CD4-positive, alpha-beta memory T cell (primary cell): ENCODE measurements at regions of chr19 and their contacts with region 1.

Region 1: DNA sequence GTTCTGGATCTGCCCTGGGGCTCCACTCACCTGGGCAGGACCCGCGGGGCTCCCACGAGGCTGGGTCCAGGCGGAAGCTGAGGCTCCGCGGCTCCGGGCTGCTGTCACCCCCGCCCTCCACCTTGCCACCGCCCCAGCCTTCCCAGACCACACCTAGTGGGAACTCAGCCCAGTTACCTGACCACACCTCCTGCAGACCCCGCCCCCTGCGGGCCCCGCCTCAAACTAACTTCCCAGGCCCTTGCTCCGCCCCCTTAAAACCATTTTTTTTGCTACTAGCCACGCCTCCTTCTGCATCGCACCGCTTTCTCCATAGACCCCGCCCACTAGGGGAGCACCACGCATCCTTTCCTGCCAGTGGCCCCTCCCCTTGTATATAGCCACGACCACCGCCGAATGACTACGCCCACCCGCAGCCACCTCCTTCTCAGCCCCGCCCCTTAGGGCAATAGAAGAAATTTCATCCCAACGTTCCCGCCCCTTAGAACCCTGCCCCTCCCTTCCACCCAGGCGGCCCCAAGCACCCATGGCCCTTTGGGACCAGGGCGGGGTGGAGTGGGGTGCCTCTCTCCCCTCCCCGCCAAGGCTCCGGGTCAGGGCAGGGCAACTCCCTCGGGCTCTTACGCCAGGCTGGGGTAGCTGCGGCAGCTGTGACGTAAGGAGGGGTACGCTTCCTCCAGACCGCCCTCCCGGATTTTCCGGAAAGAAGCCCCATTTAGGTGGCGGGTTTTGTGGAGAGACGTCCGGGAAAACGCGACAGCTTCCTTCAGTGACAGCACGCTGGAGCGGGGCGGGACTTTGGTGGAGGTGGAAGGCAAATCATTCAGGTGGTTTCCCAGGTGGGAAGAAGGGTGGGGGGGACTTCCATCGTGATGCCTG is at the start of gene SH2D3A:
- DNase-seq: peak; percentile 96 to 99 (median 96)
- H3K4me3 ChIP-seq: peak within 1 kb of the TSS; percentile 63 to 80
- H3K4me3 Mint-ChIP-seq: peak within 1 kb of the TSS; percentile 91 to 98 (median 94)
- H3K27ac ChIP-seq: peak within 1 kb of the TSS; percentile 97
- H3K27ac Mint-ChIP-seq: peak within 1 kb of the TSS; percentile 89 to 99 (median 96)
- H3K4me1 ChIP-seq: peaks cover 54% of the 10 kb centered on the region
- H3K4me1 Mint-ChIP-seq: peaks cover 31 to 67% (median 44%) of the 10 kb centered on the region in 4 donors
- H3K27me3 ChIP-seq: no peaks in the 10 kb centered on the region
- H3K27me3 Mint-ChIP-seq: no peaks in the 10 kb centered on the region
- total RNA-seq, gene SH2D3A: 59.3 to 64.3 TPM

Region 2: DNA sequence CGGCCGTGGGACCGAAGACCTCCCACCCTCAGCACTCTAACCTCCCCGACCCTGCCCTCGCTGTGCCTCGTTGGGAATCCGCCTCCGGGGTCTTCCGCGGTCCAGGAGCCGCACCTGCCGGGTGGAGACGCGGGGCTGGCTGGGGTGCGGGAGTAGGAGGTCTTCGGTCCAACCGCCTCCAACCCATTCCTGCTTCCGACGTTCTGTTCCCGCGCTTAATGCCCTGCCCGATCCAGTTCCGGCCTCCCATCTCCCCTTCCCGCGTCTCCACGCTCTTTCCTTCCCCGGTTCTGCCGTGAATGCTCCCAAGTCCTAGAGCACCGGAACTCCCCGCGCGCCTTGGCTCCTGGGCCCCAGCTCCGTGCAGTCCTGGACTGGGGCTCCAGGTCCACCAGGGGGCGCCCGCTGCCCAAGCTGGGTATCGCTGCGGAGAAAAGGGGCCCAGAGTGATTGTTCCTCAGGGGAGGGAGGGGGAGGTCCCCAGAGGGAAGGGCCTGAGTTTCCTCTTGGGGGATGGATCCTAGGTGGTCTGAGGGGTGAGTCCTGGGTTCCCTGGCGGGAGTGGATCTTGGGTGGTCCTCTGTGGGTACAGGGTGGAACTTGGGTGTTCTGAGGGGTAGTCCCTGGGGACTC is 250.8 kb before region 1 on chr19:
- CTCF ChIA-PET with region 1: interaction called, 4 read pairs
- POLR2A ChIA-PET with region 1: no interaction called
- intact Hi-C with region 1: loop called (anchors 2 kb)
- DNase-seq: peak; percentile 80 to 89 (median 85)
- H3K4me3 ChIP-seq: peak overlapping the region; percentile 30 to 70
- H3K4me3 Mint-ChIP-seq: peak overlapping the region; percentile 93 to 98 (median 96)
- H3K27ac ChIP-seq: peak overlapping the region; percentile 45
- H3K27ac Mint-ChIP-seq: peak overlapping the region; percentile 42 to 96 (median 84)
- H3K4me1 ChIP-seq: peaks cover 27% of the 10 kb centered on the region
- H3K4me1 Mint-ChIP-seq: peaks cover 21 to 38% (median 27%) of the 10 kb centered on the region in 4 donors
- H3K27me3 ChIP-seq: no peaks in the 10 kb centered on the region
- H3K27me3 Mint-ChIP-seq: no peaks in the 10 kb centered on the region

Region 3: DNA sequence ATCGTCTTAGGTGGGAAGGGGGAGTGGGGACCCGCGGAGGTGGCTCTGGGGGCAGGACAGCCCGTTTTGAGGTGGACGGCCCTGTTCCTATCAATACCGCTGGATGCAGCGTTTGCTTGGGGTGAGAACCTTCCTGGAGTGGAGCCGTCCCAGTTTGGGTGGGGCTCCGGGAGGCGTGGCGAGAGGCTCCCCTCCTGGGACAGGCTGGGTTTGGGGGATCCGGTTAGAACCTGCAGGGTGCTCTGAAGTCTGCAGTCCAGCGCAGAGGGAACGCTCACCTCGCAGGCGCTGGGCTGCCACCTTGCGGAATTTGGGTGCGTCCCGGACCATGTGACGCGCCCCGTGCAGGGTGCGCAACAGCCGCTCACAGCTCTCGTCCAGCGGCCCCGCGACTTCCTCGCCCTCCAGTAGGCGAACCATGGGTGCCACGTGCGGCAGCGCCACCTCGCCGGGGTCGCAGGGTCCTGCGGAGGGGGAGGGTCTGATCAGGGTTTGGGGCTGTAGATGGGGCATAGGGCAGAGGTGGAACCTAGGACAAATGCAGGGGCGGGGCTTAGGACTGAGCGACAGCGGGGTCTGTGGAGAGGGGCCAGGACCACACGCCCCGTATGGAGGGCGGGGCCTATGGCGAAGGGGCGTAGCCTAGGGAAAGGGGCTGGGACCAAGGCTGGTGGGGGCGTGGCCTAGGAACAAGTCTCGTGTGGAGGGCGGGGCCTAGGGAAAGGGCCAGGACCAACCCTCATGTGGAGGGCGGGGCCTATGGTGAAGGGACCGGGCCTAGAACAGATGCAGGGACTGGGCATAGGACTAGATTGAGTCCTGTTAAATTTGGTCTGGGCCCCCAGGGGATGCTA is 14.2 kb before region 1 on chr19:
- CTCF ChIA-PET with region 1: no interaction called
- POLR2A ChIA-PET with region 1: interaction called, 6 read pairs
- intact Hi-C with region 1: loop called (anchors 1 kb)
- DNase-seq: peak; percentile 71 to 77 (median 72)
- H3K4me3 ChIP-seq: peak overlapping the region in 1 of 2 donors; percentile 49
- H3K4me3 Mint-ChIP-seq: peak overlapping the region; percentile 57 to 78 (median 70)
- H3K27ac ChIP-seq: peak overlapping the region; percentile 38
- H3K27ac Mint-ChIP-seq: peak overlapping the region; percentile 77 to 93 (median 86)
- H3K4me1 ChIP-seq: no peaks in the 10 kb centered on the region
- H3K4me1 Mint-ChIP-seq: peaks cover 5 to 12% (median 8%) of the 10 kb centered on the region in 4 donors
- H3K27me3 ChIP-seq: no peaks in the 10 kb centered on the region
- H3K27me3 Mint-ChIP-seq: no peaks in the 10 kb centered on the region

Region 4: GRCh38 chr19:6779206-6779605 is 11.6 kb after region 1 on chr19:
- CTCF ChIA-PET with region 1: interaction called, 14 read pairs
- POLR2A ChIA-PET with region 1: interaction called, 6 read pairs
- intact Hi-C with region 1: no loop called
- DNase-seq: no peak
- H3K4me3 ChIP-seq: no peak overlapping the region
- H3K4me3 Mint-ChIP-seq: no peak overlapping the region
- H3K27ac ChIP-seq: no peak overlapping the region
- H3K27ac Mint-ChIP-seq: peak overlapping the region in 3 of 7 donors; percentile 17 to 95 (median 31)
- H3K4me1 ChIP-seq: peaks cover 67% of the 10 kb centered on the region
- H3K4me1 Mint-ChIP-seq: peaks cover 40 to 69% (median 53%) of the 10 kb centered on the region in 4 donors
- H3K27me3 ChIP-seq: no peaks in the 10 kb centered on the region
- H3K27me3 Mint-ChIP-seq: no peaks in the 10 kb centered on the region

Region 5: GRCh38 chr19:6790194-6791128 is 22.9 kb after region 1 on chr19:
- CTCF ChIA-PET with region 1: interaction called, 6 read pairs
- POLR2A ChIA-PET with region 1: interaction called, 13 read pairs
- intact Hi-C with region 1: no loop called
- DNase-seq: no peak
- H3K4me3 ChIP-seq: no peak overlapping the region
- H3K4me3 Mint-ChIP-seq: peak overlapping the region in 5 of 8 donors; percentile 8 to 69 (median 49)
- H3K27ac ChIP-seq: no peak overlapping the region
- H3K27ac Mint-ChIP-seq: peak overlapping the region; percentile 68 to 88 (median 77)
- H3K4me1 ChIP-seq: peaks cover 50% of the 10 kb centered on the region
- H3K4me1 Mint-ChIP-seq: peaks cover 40 to 80% (median 56%) of the 10 kb centered on the region in 4 donors
- H3K27me3 ChIP-seq: no peaks in the 10 kb centered on the region
- H3K27me3 Mint-ChIP-seq: no peaks in the 10 kb centered on the region

Region 6: DNA sequence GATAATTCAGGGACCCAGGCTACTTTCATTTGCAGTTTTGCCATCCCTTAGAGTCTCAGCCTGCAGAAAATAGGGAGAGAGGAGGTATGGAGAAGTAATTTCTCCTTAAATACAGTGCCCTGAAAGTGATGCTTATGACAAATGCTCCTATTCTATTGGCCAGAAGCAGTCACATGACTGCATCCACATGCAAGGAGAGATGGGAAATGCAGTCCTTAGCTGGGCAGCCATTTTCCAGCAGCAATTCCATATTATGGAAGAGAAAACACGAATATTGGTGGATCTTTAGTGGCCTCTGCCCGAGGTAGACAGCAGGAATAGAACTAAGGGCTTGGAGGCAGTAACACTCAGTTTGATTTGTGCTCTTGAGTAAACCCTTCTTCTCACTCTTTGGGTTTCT is 44.3 kb after region 1 on chr19:
- CTCF ChIA-PET with region 1: interaction called, 3 read pairs
- POLR2A ChIA-PET with region 1: interaction called, 19 read pairs
- intact Hi-C with region 1: loop called (anchors 1 kb)
- DNase-seq: peak in 2 of 5 donors; percentile 22 to 29
- H3K4me3 ChIP-seq: no peak overlapping the region
- H3K4me3 Mint-ChIP-seq: peak overlapping the region in 3 of 8 donors; percentile 43 to 83 (median 61)
- H3K27ac ChIP-seq: no peak overlapping the region
- H3K27ac Mint-ChIP-seq: peak overlapping the region; percentile 44 to 94 (median 90)
- H3K4me1 ChIP-seq: peaks cover 51% of the 10 kb centered on the region
- H3K4me1 Mint-ChIP-seq: peaks cover 47 to 83% (median 62%) of the 10 kb centered on the region in 4 donors
- H3K27me3 ChIP-seq: no peaks in the 10 kb centered on the region
- H3K27me3 Mint-ChIP-seq: no peaks in the 10 kb centered on the region

Region 7: GRCh38 chr19:6877766-6878165 is 110.2 kb after region 1 on chr19:
- CTCF ChIA-PET with region 1: no interaction called
- POLR2A ChIA-PET with region 1: no interaction called
- intact Hi-C with region 1: no loop called
- DNase-seq: no peak
- H3K4me3 ChIP-seq: no peak overlapping the region
- H3K4me3 Mint-ChIP-seq: no peak overlapping the region
- H3K27ac ChIP-seq: no peak overlapping the region
- H3K27ac Mint-ChIP-seq: peak overlapping the region in 1 of 7 donors; percentile 80
- H3K4me1 ChIP-seq: no peaks in the 10 kb centered on the region
- H3K4me1 Mint-ChIP-seq: peaks cover 0 to 11% (median 6%) of the 10 kb centered on the region in 4 donors
- H3K27me3 ChIP-seq: no peaks in the 10 kb centered on the region
- H3K27me3 Mint-ChIP-seq: no peaks in the 10 kb centered on the region

Region 8: GRCh38 chr19:7442423-7442822 is 674.8 kb after region 1 on chr19:
- CTCF ChIA-PET with region 1: no interaction called
- POLR2A ChIA-PET with region 1: no interaction called
- intact Hi-C with region 1: no loop called
- DNase-seq: no peak
- H3K4me3 ChIP-seq: no peak overlapping the region
- H3K4me3 Mint-ChIP-seq: no peak overlapping the region
- H3K27ac ChIP-seq: no peak overlapping the region
- H3K27ac Mint-ChIP-seq: peak overlapping the region in 1 of 7 donors; percentile 48
- H3K4me1 ChIP-seq: no peaks in the 10 kb centered on the region
- H3K4me1 Mint-ChIP-seq: no peaks in the 10 kb centered on the region
- H3K27me3 ChIP-seq: no peaks in the 10 kb centered on the region
- H3K27me3 Mint-ChIP-seq: no peaks in the 10 kb centered on the region